CD8-positive, alpha-beta T cell (primary cell): ENCODE measurements at regions of chr17 and their contacts with region 1.

Region 1: GRCh38 chr17:62065598-62066468 is 755 bp upstream of the MED13 start:
- DNase-seq: peak; percentile 97 to 99 (median 98)
- ATAC-seq: peak; percentile 93
- H3K4me3 ChIP-seq: peak overlapping the region; percentile 96
- H3K4me3 Mint-ChIP-seq: peak overlapping the region; percentile 98
- H3K27ac ChIP-seq: peak overlapping the region; percentile 88 to 96
- H3K27ac Mint-ChIP-seq: peak overlapping the region; percentile 98
- H3K4me1 ChIP-seq: peaks cover 27% of the 10 kb centered on the region
- H3K4me1 Mint-ChIP-seq: peaks cover 39% of the 10 kb centered on the region
- H3K27me3 ChIP-seq: no peaks in the 10 kb centered on the region
- H3K27me3 Mint-ChIP-seq: no peaks in the 10 kb centered on the region
- CTCF ChIP-seq: peak; percentile 82

Region 2: GRCh38 chr17:60677308-60678124 is 1388.3 kb before region 1 on chr17 and contains the start of gene BCAS3:
- CTCF ChIA-PET with region 1: no interaction called
- POLR2A ChIA-PET with region 1: interaction called, 3 read pairs
- intact Hi-C with region 1: loop called in 1 of 2 experiments (anchors 10 kb)
- DNase-seq: peak; percentile 92 to 98 (median 96)
- ATAC-seq: peak; percentile 95
- H3K4me3 ChIP-seq: peak within 1 kb of the TSS; percentile 75 to 76
- H3K4me3 Mint-ChIP-seq: peak within 1 kb of the TSS; percentile 97
- H3K27ac ChIP-seq: peak within 1 kb of the TSS; percentile 58 to 74
- H3K27ac Mint-ChIP-seq: peak within 1 kb of the TSS; percentile 98
- H3K4me1 ChIP-seq: peaks cover 11% of the 10 kb centered on the region
- H3K4me1 Mint-ChIP-seq: peaks cover 22% of the 10 kb centered on the region
- H3K27me3 ChIP-seq: no peaks in the 10 kb centered on the region
- H3K27me3 Mint-ChIP-seq: no peaks in the 10 kb centered on the region
- CTCF ChIP-seq: no peak
- total RNA-seq, gene BCAS3: 17.3 to 20.3 TPM

Region 3: DNA sequence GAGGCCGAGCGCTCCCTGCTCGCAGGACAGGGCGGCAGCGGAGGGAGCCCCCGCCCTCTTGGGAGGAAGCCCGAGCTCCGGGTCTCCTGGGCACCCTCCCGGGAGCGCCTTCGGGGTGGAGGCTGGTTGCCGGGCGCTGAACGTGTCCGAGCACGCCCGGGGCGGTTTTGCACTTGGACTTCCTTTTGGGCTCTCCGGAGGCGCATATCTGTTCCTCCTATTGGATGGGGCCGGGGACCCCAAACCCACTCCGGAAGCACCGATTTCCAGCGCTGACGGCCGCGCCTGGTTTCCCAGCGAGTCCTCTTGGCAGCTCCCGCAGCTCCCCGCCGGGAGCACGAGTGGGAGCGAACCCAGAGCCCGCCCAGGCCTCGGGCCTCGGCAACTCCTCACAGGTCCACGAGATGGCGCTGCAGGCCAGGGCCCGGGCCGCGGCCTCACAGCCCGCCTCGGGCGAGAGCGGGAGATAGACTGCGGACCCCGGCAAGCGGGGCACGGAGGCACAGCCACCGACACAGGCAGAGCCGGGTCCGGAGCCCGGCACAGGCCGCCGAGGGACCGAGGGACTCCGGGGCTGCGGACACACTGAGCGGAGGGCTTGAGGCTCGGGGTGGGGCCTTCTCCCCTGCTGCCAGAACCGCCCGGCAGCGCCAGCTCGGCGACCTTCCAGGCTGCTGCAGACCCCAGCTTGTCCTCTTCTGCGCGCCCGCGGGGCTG is 653.5 kb before region 1 on chr17:
- CTCF ChIA-PET with region 1: interaction called, 4 read pairs
- POLR2A ChIA-PET with region 1: no interaction called
- intact Hi-C with region 1: loop called in 1 of 2 experiments (anchors 5 kb)
- DNase-seq: peak; percentile 62 to 89 (median 78)
- ATAC-seq: peak; percentile 78
- H3K4me3 ChIP-seq: peak overlapping the region; percentile 60 to 78
- H3K4me3 Mint-ChIP-seq: peak overlapping the region; percentile 77
- H3K27ac ChIP-seq: no peak overlapping the region
- H3K27ac Mint-ChIP-seq: no peak overlapping the region
- H3K4me1 ChIP-seq: peaks cover 39% of the 10 kb centered on the region
- H3K4me1 Mint-ChIP-seq: peaks cover 29% of the 10 kb centered on the region
- H3K27me3 ChIP-seq: peaks cover 26 to 46% of the 10 kb centered on the region in 2 experiments
- H3K27me3 Mint-ChIP-seq: peaks cover 30% of the 10 kb centered on the region
- CTCF ChIP-seq: peak; percentile 96

Region 4: DNA sequence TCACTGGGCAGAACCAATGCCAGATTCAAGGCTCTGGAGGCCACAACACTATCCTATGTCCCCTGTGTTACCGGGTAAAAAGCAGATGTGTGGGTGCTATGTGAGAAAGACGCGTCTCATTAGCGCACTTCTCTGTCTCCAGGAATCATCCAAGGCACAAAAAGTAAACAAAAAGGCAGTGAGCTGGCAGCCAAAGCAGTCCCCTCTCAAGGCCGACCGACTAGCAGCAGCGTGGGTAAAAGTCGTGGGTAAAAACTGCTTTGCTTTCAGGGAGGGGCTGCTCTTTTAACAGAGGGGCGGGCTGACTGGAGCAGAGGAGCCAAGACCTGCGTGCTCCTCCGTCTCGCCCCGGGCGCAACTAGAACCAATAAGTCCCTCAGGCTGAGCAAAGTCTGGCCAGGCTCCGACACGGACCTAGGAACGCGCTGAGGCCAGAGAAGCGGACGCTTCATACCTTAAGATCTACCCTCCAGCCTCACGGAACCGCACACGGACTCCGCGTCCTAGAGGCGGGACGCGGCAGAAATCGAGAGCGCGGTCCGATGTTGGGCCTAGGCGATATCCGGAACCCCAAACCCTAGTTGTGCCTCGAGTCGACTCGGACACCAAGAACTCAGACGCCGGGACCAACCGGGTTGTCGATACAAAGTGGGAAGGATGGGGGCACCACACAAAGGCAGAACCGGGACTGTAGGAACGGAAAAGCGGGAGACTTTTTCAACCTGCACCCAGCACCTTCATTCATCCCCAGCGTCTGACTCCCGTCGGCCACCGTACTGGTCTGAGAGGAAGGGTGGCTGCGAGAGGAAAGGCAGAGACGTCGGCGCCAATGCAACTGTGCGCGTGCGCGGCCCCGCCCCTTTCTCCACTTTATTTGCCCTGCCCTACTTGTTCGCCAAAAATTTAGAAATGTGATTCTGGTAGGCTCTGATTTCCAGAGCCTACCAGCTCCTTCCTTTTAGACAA is 138.3 kb before region 1 on chr17 and contains the start of gene INTS2:
- CTCF ChIA-PET with region 1: no interaction called
- POLR2A ChIA-PET with region 1: no interaction called
- intact Hi-C with region 1: loop called (anchors 1 to 2 kb)
- DNase-seq: peak; percentile 92 to 98 (median 96)
- ATAC-seq: peak; percentile 84
- H3K4me3 ChIP-seq: peak within 1 kb of the TSS; percentile 80 to 91
- H3K4me3 Mint-ChIP-seq: peak within 1 kb of the TSS; percentile 90
- H3K27ac ChIP-seq: peak within 1 kb of the TSS; percentile 71 to 92
- H3K27ac Mint-ChIP-seq: peak within 1 kb of the TSS; percentile 98
- H3K4me1 ChIP-seq: peaks cover 14% of the 10 kb centered on the region
- H3K4me1 Mint-ChIP-seq: peaks cover 22% of the 10 kb centered on the region
- H3K27me3 ChIP-seq: no peaks in the 10 kb centered on the region
- H3K27me3 Mint-ChIP-seq: peaks cover 2% of the 10 kb centered on the region
- CTCF ChIP-seq: no peak
- total RNA-seq, gene INTS2: 9.4 to 9.6 TPM

Region 5: GRCh38 chr17:62030209-62030608 is 35.6 kb before region 1 on chr17:
- CTCF ChIA-PET with region 1: interaction called, 4 read pairs
- POLR2A ChIA-PET with region 1: interaction called, 3 read pairs
- intact Hi-C with region 1: loop called in 1 of 2 experiments (anchors 5 kb)
- DNase-seq: no peak
- ATAC-seq: no peak
- H3K4me3 ChIP-seq: no peak overlapping the region
- H3K4me3 Mint-ChIP-seq: no peak overlapping the region
- H3K27ac ChIP-seq: no peak overlapping the region
- H3K27ac Mint-ChIP-seq: no peak overlapping the region
- H3K4me1 ChIP-seq: no peaks in the 10 kb centered on the region
- H3K4me1 Mint-ChIP-seq: peaks cover 33% of the 10 kb centered on the region
- H3K27me3 ChIP-seq: no peaks in the 10 kb centered on the region
- H3K27me3 Mint-ChIP-seq: no peaks in the 10 kb centered on the region
- CTCF ChIP-seq: no peak

Region 6: DNA sequence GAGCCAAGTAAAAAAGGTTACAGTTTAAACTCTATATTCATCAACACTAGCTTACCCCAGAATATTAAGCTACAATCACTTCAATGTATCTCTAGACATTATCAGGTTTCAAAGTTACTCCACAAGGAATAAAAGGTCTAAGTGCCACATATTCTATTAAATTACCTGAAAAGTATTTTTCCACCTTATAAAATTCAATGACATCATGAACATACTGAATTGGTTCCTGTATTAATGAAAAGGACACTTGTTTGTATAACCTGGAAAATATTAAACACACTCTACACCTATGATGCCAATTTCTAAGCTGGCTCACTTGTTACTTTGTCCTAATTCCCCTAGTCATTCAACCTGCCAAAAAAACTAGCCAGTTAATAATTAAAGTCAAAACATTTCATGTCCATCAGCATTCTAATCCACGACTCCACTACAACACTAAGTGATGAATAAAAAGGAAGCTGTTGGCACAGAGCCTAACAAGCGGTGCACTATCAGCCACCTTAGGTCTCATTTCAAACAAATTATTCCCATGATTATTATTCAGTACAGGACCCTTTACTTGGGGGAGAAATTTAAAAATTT is 13.0 kb before region 1 on chr17:
- CTCF ChIA-PET with region 1: interaction called, 6 read pairs
- POLR2A ChIA-PET with region 1: interaction called, 3 read pairs
- intact Hi-C with region 1: loop called in 1 of 2 experiments (anchors 1 kb)
- DNase-seq: no peak
- ATAC-seq: no peak
- H3K4me3 ChIP-seq: no peak overlapping the region
- H3K4me3 Mint-ChIP-seq: no peak overlapping the region
- H3K27ac ChIP-seq: no peak overlapping the region
- H3K27ac Mint-ChIP-seq: peak overlapping the region; percentile 55
- H3K4me1 ChIP-seq: peaks cover 6% of the 10 kb centered on the region
- H3K4me1 Mint-ChIP-seq: peaks cover 64% of the 10 kb centered on the region
- H3K27me3 ChIP-seq: no peaks in the 10 kb centered on the region
- H3K27me3 Mint-ChIP-seq: no peaks in the 10 kb centered on the region
- CTCF ChIP-seq: no peak

Region 7: GRCh38 chr17:62968445-62968923 is 902.7 kb after region 1 on chr17:
- CTCF ChIA-PET with region 1: no interaction called
- POLR2A ChIA-PET with region 1: no interaction called
- intact Hi-C with region 1: loop called (anchors 10 kb)
- DNase-seq: peak in 8 of 9 experiments; percentile 6 to 87 (median 54)
- ATAC-seq: peak; percentile 39
- H3K4me3 ChIP-seq: no peak overlapping the region
- H3K4me3 Mint-ChIP-seq: peak overlapping the region; percentile 40
- H3K27ac ChIP-seq: no peak overlapping the region
- H3K27ac Mint-ChIP-seq: peak overlapping the region; percentile 3
- H3K4me1 ChIP-seq: peaks cover 23% of the 10 kb centered on the region
- H3K4me1 Mint-ChIP-seq: peaks cover 36% of the 10 kb centered on the region
- H3K27me3 ChIP-seq: no peaks in the 10 kb centered on the region
- H3K27me3 Mint-ChIP-seq: no peaks in the 10 kb centered on the region
- CTCF ChIP-seq: peak; percentile 93